Posterior cingulate gyrus (tissue), 11 donors: ENCODE measurements at regions of chr4 and their contacts with region 1.

Region 1: DNA sequence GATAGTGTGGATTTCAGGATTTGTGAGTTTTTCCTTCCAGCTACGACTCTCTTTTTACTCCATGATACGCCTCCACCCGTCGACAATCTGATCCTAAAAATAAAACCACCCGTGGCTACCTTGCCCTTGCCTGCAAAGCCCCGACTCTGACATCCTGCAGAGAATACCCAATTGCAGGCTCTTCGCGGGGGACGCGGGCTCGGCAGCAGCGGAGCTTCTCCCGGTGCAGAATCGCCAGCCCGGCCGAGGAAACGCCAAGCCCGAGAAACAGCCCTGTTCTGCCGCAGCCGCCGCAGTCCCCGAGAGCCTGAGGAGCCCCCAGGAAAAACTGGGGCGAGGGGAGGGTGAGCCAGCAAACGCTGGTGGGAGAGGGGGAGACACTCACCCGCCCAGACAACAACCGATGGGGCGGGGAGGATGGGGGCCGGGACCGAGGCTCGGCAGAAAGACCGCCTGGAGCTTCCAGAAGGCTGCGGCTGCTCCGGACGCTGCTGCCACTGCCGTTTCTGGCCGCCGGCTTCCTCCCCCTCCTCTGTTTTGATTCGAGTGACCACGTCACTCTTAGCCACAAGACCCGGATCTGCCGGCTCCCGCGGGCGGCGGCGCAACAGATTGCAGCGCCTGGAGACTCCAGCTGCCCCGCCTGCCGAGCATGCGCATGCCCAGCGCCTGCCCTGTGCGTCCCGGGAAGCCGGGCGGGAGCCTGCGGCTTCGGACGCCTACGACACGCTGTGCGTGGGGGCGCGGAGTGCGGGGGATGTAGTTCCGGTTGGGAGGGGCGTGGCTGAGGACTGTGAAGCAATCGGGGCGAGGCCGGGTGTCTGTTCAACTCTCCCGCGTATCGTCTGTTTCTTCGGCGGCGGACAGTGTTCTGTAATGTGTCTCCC is at the start of gene SMIM14:
- DNase-seq: peak; percentile 98 to 100 (median 98)

Region 2: DNA sequence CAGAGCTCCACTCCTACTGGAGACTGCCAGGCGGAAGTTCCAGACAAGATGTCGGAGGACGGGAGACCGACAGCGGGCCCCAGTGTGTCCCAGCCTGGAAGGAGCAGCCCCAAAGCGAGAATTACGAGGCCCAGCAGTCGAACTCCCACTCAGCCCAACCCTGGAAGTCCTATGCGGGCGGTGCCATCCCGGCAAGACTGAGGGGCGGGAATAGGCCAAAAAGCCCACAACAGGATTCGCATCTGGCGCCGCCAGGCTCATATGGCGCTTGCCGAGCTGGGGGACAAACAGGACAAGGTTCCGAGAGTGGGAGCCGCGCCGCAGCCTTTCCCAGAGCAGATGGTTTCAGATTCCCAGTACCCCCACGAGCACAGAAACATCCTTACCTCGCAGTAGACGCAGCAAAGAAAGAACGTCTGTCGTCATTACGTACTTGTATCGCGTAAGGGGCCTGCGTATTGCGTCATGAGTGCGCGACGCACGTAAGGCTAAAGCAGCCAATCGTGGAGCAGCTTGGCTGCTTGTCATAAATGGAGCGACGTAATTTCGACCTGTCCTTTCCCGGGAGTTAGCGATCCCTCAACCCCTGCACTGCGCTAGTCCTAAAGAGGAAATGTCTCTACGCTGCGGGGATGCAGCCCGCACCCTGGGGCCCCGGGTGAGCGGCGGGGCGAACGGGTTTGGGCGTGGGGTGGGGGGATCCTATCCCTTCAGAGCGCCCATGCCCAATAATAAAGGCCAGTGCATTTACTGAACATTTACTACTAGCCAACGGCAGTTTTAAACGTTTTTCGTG is 179.9 kb before region 1 on chr4 and contains the starts of genes LIAS and RPL9:
- intact Hi-C with region 1: loop called (anchors 5 kb)
- DNase-seq: peak; percentile 84 to 99 (median 90)

Region 3: DNA sequence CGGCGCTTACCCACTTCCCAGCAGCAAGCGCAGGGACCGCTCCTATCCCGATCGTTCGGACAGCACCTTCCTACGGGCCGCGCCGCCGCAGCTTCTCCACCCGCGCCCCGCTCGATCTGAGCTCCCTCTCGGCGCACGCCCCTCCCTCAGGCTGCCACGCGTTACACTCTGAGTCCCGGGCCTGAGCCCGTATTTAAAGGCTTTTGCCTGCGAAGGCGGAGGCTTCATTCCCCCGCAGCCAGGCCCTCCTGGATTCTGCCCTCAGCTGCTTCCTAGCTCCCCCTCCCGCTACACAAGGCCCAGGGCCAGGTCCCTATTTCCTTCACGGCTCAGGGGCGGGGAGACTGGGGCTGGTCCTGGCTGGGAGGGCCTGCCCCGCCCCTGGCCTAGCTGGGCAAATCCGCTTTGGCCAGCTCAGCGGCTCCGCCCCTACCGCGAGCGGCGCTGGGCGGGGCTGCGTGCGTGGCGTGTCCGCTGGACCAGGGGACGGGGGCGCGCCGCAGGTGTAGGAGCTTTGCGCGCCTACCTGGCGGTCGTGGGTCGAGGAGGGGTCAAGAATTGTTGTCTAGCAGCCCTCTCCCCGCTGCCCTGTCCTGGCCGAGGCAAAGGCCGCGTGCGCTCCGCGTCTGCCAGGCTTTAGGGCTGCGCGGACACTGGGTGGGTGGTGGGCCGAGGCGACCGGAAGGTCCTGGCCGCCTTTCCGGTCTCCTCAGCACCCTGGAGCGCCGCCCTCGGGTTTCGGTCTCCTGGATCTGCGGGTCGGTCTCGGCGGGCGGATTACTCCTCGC is 111.1 kb before region 1 on chr4 and contains the start of gene UGDH:
- intact Hi-C with region 1: loop called (anchors 1 kb)
- DNase-seq: peak; percentile 91 to 100 (median 97)

Region 4: DNA sequence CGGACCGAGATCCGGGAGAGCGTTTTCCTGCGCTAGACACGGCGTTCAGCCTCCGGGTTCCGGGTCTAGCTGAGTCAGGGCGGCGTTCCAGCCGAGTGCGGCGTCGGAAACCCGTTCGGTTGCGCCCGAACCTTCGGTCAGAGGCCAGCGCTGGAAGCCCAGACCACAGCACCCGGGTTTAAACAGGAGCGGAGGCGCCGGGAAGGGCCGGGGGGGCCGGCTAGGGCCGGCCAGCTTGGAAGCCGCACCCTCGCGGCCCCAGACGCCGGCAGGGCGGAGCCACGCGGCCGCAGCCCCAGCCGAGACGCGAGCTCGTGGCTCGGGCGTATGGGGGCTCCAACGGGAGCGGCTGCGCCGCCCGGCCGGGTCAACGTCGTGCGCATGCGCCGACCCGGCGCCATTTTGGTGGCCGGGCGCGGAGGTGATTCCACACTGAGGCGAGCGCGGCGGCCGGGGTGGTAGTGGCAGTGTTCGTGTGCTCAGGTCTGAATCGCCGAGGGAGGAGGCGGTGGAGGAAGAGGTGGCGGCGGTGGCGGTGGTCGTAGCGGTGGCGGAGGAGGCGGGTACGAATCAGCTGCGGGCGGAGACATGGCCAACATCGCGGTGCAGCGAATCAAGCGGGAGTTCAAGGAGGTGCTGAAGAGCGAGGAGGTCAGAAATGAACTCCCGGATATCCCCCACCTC is 59.3 kb after region 1 on chr4 and contains the start of gene UBE2K:
- intact Hi-C with region 1: loop called (anchors 2 kb)
- DNase-seq: peak; percentile 71 to 97 (median 80)

Region 5: GRCh38 chr4:39977489-39978377 is 339.1 kb after region 1 on chr4 and contains the start of gene PDS5A:
- intact Hi-C with region 1: loop called (anchors 2 kb)
- DNase-seq: peak; percentile 75 to 98 (median 82)